H1 (cell line): ENCODE measurements at regions of chr19 and their contacts with region 1.

Region 1: GRCh38 chr19:37987356-37988332 is 80.6 kb downstream of the SIPA1L3 start:
- DNase-seq: peak in 1 of 2 experiments; percentile 86
- H3K4me3 ChIP-seq: no peak overlapping the region
- H3K27ac ChIP-seq: no peak overlapping the region
- H3K4me1 ChIP-seq: peaks cover 15 to 41% (median 31%) of the 10 kb centered on the region in 4 experiments
- H3K27me3 ChIP-seq: no peaks in the 10 kb centered on the region
- CTCF ChIP-seq: peak; percentile 62 to 73 (median 72)
- EP300 ChIP-seq: no peak
- POLR2A ChIP-seq: no peak
- RAD21 ChIP-seq: peak; percentile 54 to 65

Region 2: GRCh38 chr19:37920591-37921450 is 66.8 kb before region 1 on chr19:
- CTCF ChIA-PET with region 1: interaction called, 11 read pairs
- POLR2A ChIA-PET with region 1: interaction called, 5 read pairs
- DNase-seq: no peak
- H3K4me3 ChIP-seq: no peak overlapping the region
- H3K27ac ChIP-seq: no peak overlapping the region
- H3K4me1 ChIP-seq: peaks cover 0 to under 1% (median 0%) of the 10 kb centered on the region in 4 experiments; a peak in 2 of 7 replicates
- H3K27me3 ChIP-seq: no peaks in the 10 kb centered on the region
- CTCF ChIP-seq: no peak
- EP300 ChIP-seq: no peak
- POLR2A ChIP-seq: no peak
- RAD21 ChIP-seq: no peak

Region 3: GRCh38 chr19:37953533-37954303 is 33.9 kb before region 1 on chr19:
- CTCF ChIA-PET with region 1: interaction called, 11 read pairs
- POLR2A ChIA-PET with region 1: interaction called, 5 read pairs
- DNase-seq: no peak
- H3K4me3 ChIP-seq: no peak overlapping the region; a peak in 1 of 8 replicates
- H3K27ac ChIP-seq: peak overlapping the region; percentile 37; the same call in 1 of the 2 replicates
- H3K4me1 ChIP-seq: peaks cover 3 to 12% (median 10%) of the 10 kb centered on the region in 4 experiments; a peak in 6 of 7 replicates
- H3K27me3 ChIP-seq: no peaks in the 10 kb centered on the region
- CTCF ChIP-seq: no peak
- EP300 ChIP-seq: no peak
- POLR2A ChIP-seq: no peak
- RAD21 ChIP-seq: no peak

Region 4: GRCh38 chr19:38004521-38005223 is 17.0 kb after region 1 on chr19:
- CTCF ChIA-PET with region 1: interaction called, 15 read pairs
- POLR2A ChIA-PET with region 1: interaction called, 66 read pairs
- DNase-seq: peak in 1 of 2 experiments; percentile 78
- H3K4me3 ChIP-seq: peak overlapping the region; percentile 31 to 50 (median 40); a peak in 6 of 8 replicates
- H3K27ac ChIP-seq: peak overlapping the region; percentile 87
- H3K4me1 ChIP-seq: peaks cover 13 to 27% (median 22%) of the 10 kb centered on the region in 4 experiments
- H3K27me3 ChIP-seq: no peaks in the 10 kb centered on the region
- CTCF ChIP-seq: no peak
- EP300 ChIP-seq: no peak
- POLR2A ChIP-seq: peak; percentile 90 to 97
- RAD21 ChIP-seq: no peak

Region 5: GRCh38 chr19:38033658-38034498 is 46.2 kb after region 1 on chr19:
- CTCF ChIA-PET with region 1: interaction called, 14 read pairs
- POLR2A ChIA-PET with region 1: interaction called, 3 read pairs
- DNase-seq: peak in 1 of 2 experiments; percentile 25
- H3K4me3 ChIP-seq: no peak overlapping the region
- H3K27ac ChIP-seq: peak overlapping the region; percentile 16; the same call in 1 of the 2 replicates
- H3K4me1 ChIP-seq: peaks cover 7 to 19% (median 14%) of the 10 kb centered on the region in 4 experiments
- H3K27me3 ChIP-seq: no peaks in the 10 kb centered on the region
- CTCF ChIP-seq: peak; percentile 32 to 55 (median 41)
- EP300 ChIP-seq: no peak
- POLR2A ChIP-seq: no peak
- RAD21 ChIP-seq: peak; percentile 40 to 48; a peak in 3 of 4 replicates

Region 6: GRCh38 chr19:38183251-38183897 is 195.7 kb after region 1 on chr19:
- CTCF ChIA-PET with region 1: no interaction called
- POLR2A ChIA-PET with region 1: no interaction called
- DNase-seq: peak; percentile 27 to 93
- H3K4me3 ChIP-seq: peak overlapping the region; percentile 18 to 62 (median 55); a peak in 7 of 8 replicates
- H3K27ac ChIP-seq: no peak overlapping the region
- H3K4me1 ChIP-seq: peaks cover 0 to 13% (median 7%) of the 10 kb centered on the region in 4 experiments; a peak in 6 of 7 replicates
- H3K27me3 ChIP-seq: no peaks in the 10 kb centered on the region
- CTCF ChIP-seq: no peak
- EP300 ChIP-seq: no peak
- POLR2A ChIP-seq: 0 out of 3 replicates have a peak, but pooled peaks of 1 of the 2 experiments have one; percentile 20
- RAD21 ChIP-seq: no peak; a peak in 1 of 4 replicates

Region 7: DNA sequence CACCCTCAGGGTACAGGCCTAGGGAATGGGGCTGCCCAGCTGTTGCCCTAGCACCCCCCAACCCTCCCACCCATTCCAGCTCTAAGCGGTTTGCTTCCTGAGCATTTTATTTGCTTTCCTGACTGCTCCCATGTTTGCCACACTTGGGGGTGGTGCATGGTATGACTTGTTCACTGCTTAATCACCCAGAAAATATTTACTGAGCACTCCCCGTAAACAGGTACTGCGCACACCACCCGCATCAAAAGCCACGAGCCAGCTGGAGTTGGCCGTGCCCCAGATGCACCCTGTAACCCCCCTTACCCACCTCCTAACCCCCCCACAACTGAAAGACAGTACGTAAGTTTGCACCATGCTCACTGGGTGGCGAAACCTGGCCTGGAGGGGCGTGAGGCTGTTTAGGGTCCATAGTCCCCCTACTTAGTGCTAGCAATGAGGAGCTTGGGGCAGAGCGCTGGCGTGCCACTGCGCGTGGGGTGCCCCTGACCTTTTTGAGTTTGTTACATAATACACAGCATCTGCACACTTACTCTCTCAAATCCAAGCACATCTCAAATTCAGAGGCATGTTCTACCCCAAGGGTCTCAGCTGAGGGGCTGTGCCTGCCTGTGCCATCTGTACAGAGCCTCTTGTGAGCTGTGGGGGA is 206.5 kb after region 1 on chr19:
- CTCF ChIA-PET with region 1: no interaction called
- POLR2A ChIA-PET with region 1: no interaction called
- DNase-seq: no peak
- H3K4me3 ChIP-seq: no peak overlapping the region
- H3K27ac ChIP-seq: no peak overlapping the region
- H3K4me1 ChIP-seq: no peaks in the 10 kb centered on the region; a peak in 1 of 7 replicates
- H3K27me3 ChIP-seq: no peaks in the 10 kb centered on the region
- CTCF ChIP-seq: no peak
- EP300 ChIP-seq: no peak
- POLR2A ChIP-seq: no peak
- RAD21 ChIP-seq: no peak